ENCODE measurements at regions of chr17 and their contacts with region 1.

Region 1: GRCh38 chr17:80991645-80992076 is at the start of gene CHMP6:
- DNase-seq: peak; percentile 87
- H3K4me3 ChIP-seq: peak within 1 kb of the TSS; percentile 60 to 99 (median 98)
- H3K27ac ChIP-seq: peak within 1 kb of the TSS; percentile 66 to 82 (median 72)
- H3K4me1 ChIP-seq: peaks cover 0 to 62% (median 53%) of the 10 kb centered on the region in 4 donors
- H3K27me3 ChIP-seq: no peaks in the 10 kb centered on the region
- CTCF ChIP-seq: peak in 1 of 4 experiments; percentile 24
- EP300 ChIP-seq: no peak
- POLR2A ChIP-seq: no peak
- total RNA-seq, gene CHMP6: 15.7 to 28.2 (median 22.2) TPM

Region 2: GRCh38 chr17:81018044-81018802 is 26.6 kb after region 1 on chr17:
- intact Hi-C with region 1: loop called (anchors 2 kb)
- DNase-seq: peak; percentile 74
- H3K4me3 ChIP-seq: peak overlapping the region; percentile 14 to 39 (median 32)
- H3K27ac ChIP-seq: peak overlapping the region; percentile 77 to 82 (median 82)
- H3K4me1 ChIP-seq: peaks cover 0 to 72% (median 47%) of the 10 kb centered on the region in 4 donors
- H3K27me3 ChIP-seq: no peaks in the 10 kb centered on the region
- CTCF ChIP-seq: no peak
- EP300 ChIP-seq: no peak
- POLR2A ChIP-seq: no peak

Region 3: DNA sequence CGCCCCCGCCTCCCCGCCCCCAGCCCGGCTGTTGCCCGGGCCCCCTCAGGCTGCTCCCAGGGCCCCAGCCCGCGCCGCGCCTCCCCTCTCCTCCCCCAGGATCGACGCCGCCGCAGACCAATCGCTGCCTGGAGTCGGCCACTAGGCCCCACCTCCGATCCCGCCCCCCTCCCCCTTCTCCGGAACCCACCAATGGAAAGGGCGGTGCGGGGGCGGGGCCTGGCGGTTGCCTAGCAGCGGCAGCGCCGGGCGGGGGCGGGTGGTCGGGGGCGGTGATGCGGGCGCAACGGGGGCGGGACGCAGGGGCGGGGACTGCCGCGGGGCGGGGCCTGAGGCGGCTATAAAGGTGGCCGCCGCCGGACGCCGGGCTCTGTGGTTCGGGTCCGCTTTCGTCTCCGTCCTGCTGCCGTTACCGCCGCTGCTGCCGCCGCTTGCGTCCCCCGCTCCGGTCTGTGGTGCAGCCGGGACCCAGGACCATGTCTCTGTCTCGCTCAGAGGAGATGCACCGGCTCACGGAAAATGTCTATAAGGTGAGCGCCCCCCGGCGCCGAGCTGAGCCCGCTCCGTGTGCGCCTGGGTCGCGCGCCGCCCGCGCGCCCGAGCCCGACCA is 43.2 kb after region 1 on chr17 and contains the start of gene BAIAP2:
- intact Hi-C with region 1: loop called (anchors 5 kb)
- DNase-seq: peak; percentile 98
- H3K4me3 ChIP-seq: peak within 1 kb of the TSS; percentile 53 to 67 (median 62)
- H3K27ac ChIP-seq: peak within 1 kb of the TSS; percentile 76 to 92 (median 87)
- H3K4me1 ChIP-seq: peaks cover 0 to 55% (median 52%) of the 10 kb centered on the region in 4 donors
- H3K27me3 ChIP-seq: no peaks in the 10 kb centered on the region
- CTCF ChIP-seq: no peak
- EP300 ChIP-seq: no peak
- POLR2A ChIP-seq: peak; percentile 91 to 96
- total RNA-seq, gene BAIAP2: 32.6 to 52.3 (median 50.9) TPM

Region 4: GRCh38 chr17:81101614-81102306 is 110.1 kb after region 1 on chr17:
- intact Hi-C with region 1: loop called (anchors 1 kb)
- DNase-seq: peak; percentile 87
- H3K4me3 ChIP-seq: no peak overlapping the region
- H3K27ac ChIP-seq: no peak overlapping the region
- H3K4me1 ChIP-seq: peaks cover 0 to 32% (median 24%) of the 10 kb centered on the region in 4 donors
- H3K27me3 ChIP-seq: no peaks in the 10 kb centered on the region
- CTCF ChIP-seq: peak; percentile 100
- EP300 ChIP-seq: no peak
- POLR2A ChIP-seq: no peak

Measured in sigmoid colon (tissue), 7 donors.